ENCODE measurements at regions of chr1 and their contacts with region 1.

Region 1: DNA sequence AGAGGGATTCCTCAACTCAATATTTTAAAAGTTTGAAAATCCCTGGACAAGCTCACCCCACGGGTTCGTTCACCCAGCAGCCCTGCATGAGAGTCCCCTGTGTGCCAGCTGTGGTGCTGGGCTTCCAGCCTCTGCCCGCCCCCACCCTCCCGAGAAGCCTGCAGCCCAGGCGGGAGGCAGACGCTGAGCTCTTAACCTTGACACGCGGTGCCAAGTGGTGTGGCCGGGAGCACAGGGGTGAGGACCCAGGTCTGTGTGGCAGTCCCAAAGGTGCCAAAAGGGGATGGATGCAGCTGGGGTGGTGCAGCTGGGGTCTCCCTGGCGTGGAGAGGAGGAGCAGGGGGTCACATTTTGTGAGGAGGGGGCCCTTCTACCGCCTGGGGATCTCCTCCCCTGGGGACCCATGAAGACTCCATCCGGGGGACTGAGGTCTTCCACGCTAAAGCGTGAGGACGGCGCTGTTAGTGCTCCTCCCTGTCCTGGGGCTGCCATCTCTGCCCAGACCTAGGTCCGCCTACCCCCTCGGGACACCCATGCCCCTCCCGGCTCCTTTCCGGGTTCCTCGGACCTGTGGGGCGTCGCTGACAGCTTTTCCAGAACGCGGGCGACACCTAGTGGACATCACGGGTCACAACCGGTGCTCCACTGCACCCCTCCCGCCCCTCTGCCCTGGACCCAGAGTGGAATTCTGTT is 12.9 kb downstream of the PLA2G2F start:
- DNase-seq: peak; percentile 83 to 85
- ATAC-seq: peak; percentile 95

Region 2: DNA sequence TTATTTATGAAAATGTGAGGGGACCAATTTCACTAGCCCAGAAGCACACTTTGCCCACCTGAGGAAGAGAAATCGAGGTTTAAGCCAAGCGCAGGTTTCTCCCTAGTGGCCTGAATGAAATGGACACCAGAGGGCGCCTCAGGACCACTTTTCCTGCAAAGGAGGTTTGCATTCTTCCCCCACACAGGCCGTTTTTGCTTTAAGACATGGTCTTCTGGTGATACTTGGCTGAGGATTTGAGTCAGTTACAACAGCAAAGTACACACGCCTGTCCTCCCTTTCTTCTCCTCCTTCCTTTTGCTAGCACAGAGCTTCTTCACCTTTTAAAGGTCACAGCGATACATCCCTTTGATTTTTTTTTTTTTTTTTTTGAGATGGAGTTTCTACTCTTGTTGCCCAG is 234.0 kb before region 1 on chr1:
- intact Hi-C with region 1: loop called in 1 of 2 experiments (anchors 5 kb)
- DNase-seq: peak; percentile 60 to 92
- ATAC-seq: peak; percentile 56

Region 3: GRCh38 chr1:19974822-19975416 is 177.1 kb before region 1 on chr1:
- intact Hi-C with region 1: loop called in 1 of 2 experiments (anchors 10 kb)
- DNase-seq: peak; percentile 48 to 56
- ATAC-seq: peak; percentile 96

Region 4: GRCh38 chr1:20100632-20101355 is 51.3 kb before region 1 on chr1:
- intact Hi-C with region 1: loop called in 1 of 2 experiments (anchors 10 kb)
- DNase-seq: peak; percentile 29 to 34
- ATAC-seq: peak; percentile 80

Region 5: GRCh38 chr1:20212685-20213331 is 60.8 kb after region 1 on chr1:
- intact Hi-C with region 1: no loop called
- DNase-seq: peak; percentile 76 to 79
- ATAC-seq: peak; percentile 74

Measured in left colon (tissue), 2 donors.